MCF 10A (cell line): ENCODE measurements at regions of chr10 and their contacts with region 1.

Region 1: DNA sequence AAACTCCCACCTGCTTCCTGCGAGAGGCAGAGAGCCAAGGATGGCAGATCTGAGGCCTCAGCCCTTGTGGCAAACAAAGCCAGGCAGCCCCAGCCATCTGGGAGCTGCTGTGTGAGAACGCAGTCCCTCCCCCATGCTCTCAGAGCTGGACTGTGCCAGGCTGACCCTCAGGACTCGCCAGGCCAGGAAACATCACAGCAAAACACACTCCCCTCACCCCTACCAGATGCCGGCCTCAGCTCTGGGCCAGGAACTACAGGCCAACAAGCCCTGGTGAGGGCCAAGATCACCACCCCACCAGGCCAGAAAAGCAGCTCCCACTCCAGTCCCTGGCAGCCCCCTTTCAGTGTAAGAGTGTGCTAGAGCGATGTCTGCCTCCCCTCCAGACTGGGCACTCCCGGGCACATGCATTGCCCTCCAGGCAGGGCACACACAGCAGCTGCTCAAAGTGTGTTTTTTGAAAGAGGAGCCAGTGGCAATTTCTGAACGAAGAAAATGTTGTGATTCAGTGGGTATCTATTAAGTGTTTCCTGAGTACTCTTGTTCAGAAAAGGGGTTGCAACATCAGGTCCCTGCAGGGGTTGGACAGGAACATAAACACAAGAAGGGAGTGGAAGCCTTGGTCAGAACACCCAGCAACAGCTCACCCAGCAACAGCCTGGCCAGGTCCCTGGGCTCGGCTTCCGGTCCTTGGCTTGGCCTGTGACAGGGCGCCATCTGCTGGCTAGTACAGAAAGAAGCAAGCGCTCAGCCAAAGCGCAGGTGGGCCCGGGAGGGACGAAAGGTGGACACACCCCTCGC is 18.3 kb downstream of the LRRC20 start:
- DNase-seq: peak; percentile 98
- H3K4me3 Mint-ChIP-seq: peak overlapping the region; percentile 49
- H3K27ac Mint-ChIP-seq: peak overlapping the region; percentile 92
- H3K4me1 Mint-ChIP-seq: peaks cover 6% of the 10 kb centered on the region
- H3K27me3 Mint-ChIP-seq: no peaks in the 10 kb centered on the region
- CTCF ChIP-seq: peak; percentile 89

Region 2: GRCh38 chr10:70115948-70116682 is 248.1 kb before region 1 on chr10:
- CTCF ChIA-PET with region 1: interaction called, 18 read pairs
- POLR2A ChIA-PET with region 1: interaction called, 6 read pairs
- intact Hi-C with region 1: loop called (anchors 1 kb)
- DNase-seq: peak; percentile 68
- H3K4me3 Mint-ChIP-seq: no peak overlapping the region
- H3K27ac Mint-ChIP-seq: no peak overlapping the region
- H3K4me1 Mint-ChIP-seq: peaks cover 6% of the 10 kb centered on the region
- H3K27me3 Mint-ChIP-seq: no peaks in the 10 kb centered on the region
- CTCF ChIP-seq: peak; percentile 65

Region 3: DNA sequence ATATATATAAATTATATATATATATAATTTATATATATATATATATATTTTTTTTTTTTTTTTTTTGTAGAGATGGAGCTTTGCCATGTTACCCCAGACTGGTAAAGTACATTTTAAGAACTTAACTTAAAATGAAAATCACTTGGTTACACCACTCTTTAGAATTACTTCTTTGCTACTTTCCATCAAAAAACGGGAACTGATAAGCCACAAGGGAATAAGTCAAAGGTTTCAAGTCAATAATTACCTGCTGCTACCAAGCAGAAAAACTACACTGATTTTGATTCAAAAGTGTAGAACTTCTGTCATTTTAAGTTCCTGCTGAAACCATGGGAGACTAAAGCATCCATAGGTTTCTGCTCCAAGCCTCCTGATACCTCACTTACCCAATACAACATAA is 143.1 kb before region 1 on chr10:
- CTCF ChIA-PET with region 1: interaction called, 232 read pairs
- POLR2A ChIA-PET with region 1: interaction called, 116 read pairs
- intact Hi-C with region 1: loop called (anchors 1 kb)
- DNase-seq: no peak
- H3K4me3 Mint-ChIP-seq: peak overlapping the region; percentile 45
- H3K27ac Mint-ChIP-seq: peak overlapping the region; percentile 87
- H3K4me1 Mint-ChIP-seq: peaks cover 32% of the 10 kb centered on the region
- H3K27me3 Mint-ChIP-seq: no peaks in the 10 kb centered on the region
- CTCF ChIP-seq: no peak

Region 4: GRCh38 chr10:70267161-70267933 is 96.8 kb before region 1 on chr10:
- CTCF ChIA-PET with region 1: interaction called, 23 read pairs
- POLR2A ChIA-PET with region 1: interaction called, 18 read pairs
- intact Hi-C with region 1: loop called (anchors 2 kb)
- DNase-seq: peak; percentile 95
- H3K4me3 Mint-ChIP-seq: peak overlapping the region; percentile 3
- H3K27ac Mint-ChIP-seq: peak overlapping the region; percentile 92
- H3K4me1 Mint-ChIP-seq: peaks cover 30% of the 10 kb centered on the region
- H3K27me3 Mint-ChIP-seq: no peaks in the 10 kb centered on the region
- CTCF ChIP-seq: peak; percentile 43

Region 5: DNA sequence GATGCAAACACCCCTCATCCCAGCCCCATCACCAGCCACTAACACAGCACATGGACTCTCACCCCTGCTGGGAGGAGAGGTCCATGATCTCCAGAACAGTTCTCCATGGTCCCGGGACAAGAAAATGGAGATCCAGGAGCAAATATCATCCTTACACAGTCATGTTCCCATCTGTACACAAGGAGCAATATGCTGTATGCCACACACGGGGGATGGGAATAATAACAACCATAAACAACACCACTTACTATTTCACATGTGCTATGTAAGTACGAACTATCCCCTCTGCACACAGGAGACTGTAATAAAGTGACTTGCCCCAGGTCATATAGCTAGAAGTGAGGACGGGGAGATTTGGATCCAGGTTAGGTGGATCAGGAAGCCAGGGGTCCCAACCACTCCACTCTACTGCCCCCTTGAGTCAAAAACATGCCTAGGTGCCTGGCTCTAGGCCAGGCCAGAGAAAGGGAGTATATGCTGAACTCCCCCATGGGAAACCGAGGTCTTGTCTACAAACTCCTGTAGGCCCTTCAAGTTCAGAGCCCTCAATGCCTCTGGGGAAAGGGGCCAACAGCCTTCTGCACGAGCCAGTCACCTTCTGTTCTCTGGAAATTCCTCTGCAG is 15.8 kb before region 1 on chr10:
- CTCF ChIA-PET with region 1: interaction called, 26 read pairs
- POLR2A ChIA-PET with region 1: interaction called, 7 read pairs
- intact Hi-C with region 1: no loop called
- DNase-seq: peak; percentile 76
- H3K4me3 Mint-ChIP-seq: no peak overlapping the region
- H3K27ac Mint-ChIP-seq: no peak overlapping the region
- H3K4me1 Mint-ChIP-seq: peaks cover 15% of the 10 kb centered on the region
- H3K27me3 Mint-ChIP-seq: no peaks in the 10 kb centered on the region
- CTCF ChIP-seq: peak; percentile 72

Region 6: GRCh38 chr10:70391654-70392053 is 27.5 kb after region 1 on chr10:
- CTCF ChIA-PET with region 1: interaction called, 18 read pairs
- POLR2A ChIA-PET with region 1: interaction called, 24 read pairs
- intact Hi-C with region 1: loop called (anchors 1 kb)
- DNase-seq: no peak
- H3K4me3 Mint-ChIP-seq: no peak overlapping the region
- H3K27ac Mint-ChIP-seq: no peak overlapping the region
- H3K4me1 Mint-ChIP-seq: peaks cover 10% of the 10 kb centered on the region
- H3K27me3 Mint-ChIP-seq: peaks cover 12% of the 10 kb centered on the region
- CTCF ChIP-seq: no peak